Pancreas (tissue), 10 donors: ENCODE measurements at regions of chr3 and their contacts with region 1.

Region 1: GRCh38 chr3:94062431-94063404 is at the starts of genes DHFR2 and NSUN3:
- DNase-seq: peak; percentile 83 to 94 (median 91)
- ATAC-seq: peak; percentile 95 to 97 (median 96)
- H3K4me3 ChIP-seq: peak within 1 kb of the TSS; percentile 35 to 74 (median 54)
- H3K27ac ChIP-seq: peak within 1 kb of the TSS; percentile 79 to 99 (median 93)
- H3K4me1 ChIP-seq: peaks cover 5 to 27% (median 22%) of the 10 kb centered on the region in 3 donors
- H3K27me3 ChIP-seq: no peaks in the 10 kb centered on the region
- CTCF ChIP-seq: no peak
- total RNA-seq, gene DHFR2: 3.0 to 5.0 (median 4.0) TPM
- total RNA-seq, gene NSUN3: 4.5 to 9.7 (median 5.8) TPM

Region 2: GRCh38 chr3:94004301-94004910 is 58.3 kb before region 1 on chr3:
- intact Hi-C with region 1: loop called in 1 of 3 experiments (anchors 10 kb)
- DNase-seq: no peak
- ATAC-seq: peak; percentile 68 to 96 (median 92)
- H3K4me3 ChIP-seq: no peak overlapping the region
- H3K27ac ChIP-seq: no peak overlapping the region
- H3K4me1 ChIP-seq: peaks cover 0 to 4% (median 0%) of the 10 kb centered on the region in 3 donors
- H3K27me3 ChIP-seq: no peaks in the 10 kb centered on the region
- CTCF ChIP-seq: peak; percentile 12 to 63 (median 52)

Region 3: DNA sequence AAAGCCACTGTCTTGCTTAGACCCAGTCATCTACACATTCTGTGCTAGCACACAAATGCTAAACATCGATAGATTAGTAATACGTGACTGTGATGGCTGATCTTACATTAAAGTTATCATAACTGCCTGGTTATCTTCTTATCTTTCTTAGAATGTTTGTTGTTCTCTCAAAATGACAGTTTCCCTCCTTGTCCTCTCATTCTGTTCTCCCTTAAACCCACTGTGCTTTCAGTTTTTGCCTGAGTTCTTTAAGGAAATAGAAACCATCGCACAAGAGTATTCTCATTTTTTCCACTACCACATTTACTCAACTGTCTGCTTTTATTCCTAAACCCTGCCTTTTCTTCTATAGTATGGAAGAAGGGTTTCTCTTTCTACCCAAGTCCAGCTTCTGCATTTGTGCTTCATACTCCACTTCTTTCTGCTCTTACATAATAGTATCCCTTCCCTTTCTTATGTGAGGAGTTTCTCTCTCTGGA is 51.4 kb before region 1 on chr3:
- intact Hi-C with region 1: loop called in 2 of 3 experiments (anchors 10 kb)
- DNase-seq: no peak
- ATAC-seq: peak in 1 of 4 donors; percentile 30
- H3K4me3 ChIP-seq: no peak overlapping the region
- H3K27ac ChIP-seq: no peak overlapping the region
- H3K4me1 ChIP-seq: no peaks in the 10 kb centered on the region
- H3K27me3 ChIP-seq: no peaks in the 10 kb centered on the region
- CTCF ChIP-seq: no peak

Region 4: GRCh38 chr3:94234177-94234788 is 171.6 kb after region 1 on chr3:
- intact Hi-C with region 1: no loop called
- DNase-seq: no peak
- ATAC-seq: peak in 3 of 4 donors; percentile 42 to 67 (median 66)
- H3K4me3 ChIP-seq: no peak overlapping the region
- H3K27ac ChIP-seq: no peak overlapping the region
- H3K4me1 ChIP-seq: no peaks in the 10 kb centered on the region
- H3K27me3 ChIP-seq: no peaks in the 10 kb centered on the region
- CTCF ChIP-seq: peak; percentile 11 to 41 (median 26)